Ovary (tissue), 10 donors: ENCODE measurements at regions of chr22 and their contacts with region 1.

Region 1: GRCh38 chr22:22748297-22748743 is 103.9 kb downstream of the GGTLC2 start:
- DNase-seq: peak; percentile 34 to 67 (median 58)
- H3K4me3 ChIP-seq: no peak overlapping the region
- H3K27ac ChIP-seq: no peak overlapping the region
- H3K4me1 ChIP-seq: no peaks in the 10 kb centered on the region
- H3K27me3 ChIP-seq: no peaks in the 10 kb centered on the region
- CTCF ChIP-seq: peak in 2 of 3 donors; percentile 39 to 45
- EP300 ChIP-seq: no peak
- POLR2A ChIP-seq: no peak

Region 2: DNA sequence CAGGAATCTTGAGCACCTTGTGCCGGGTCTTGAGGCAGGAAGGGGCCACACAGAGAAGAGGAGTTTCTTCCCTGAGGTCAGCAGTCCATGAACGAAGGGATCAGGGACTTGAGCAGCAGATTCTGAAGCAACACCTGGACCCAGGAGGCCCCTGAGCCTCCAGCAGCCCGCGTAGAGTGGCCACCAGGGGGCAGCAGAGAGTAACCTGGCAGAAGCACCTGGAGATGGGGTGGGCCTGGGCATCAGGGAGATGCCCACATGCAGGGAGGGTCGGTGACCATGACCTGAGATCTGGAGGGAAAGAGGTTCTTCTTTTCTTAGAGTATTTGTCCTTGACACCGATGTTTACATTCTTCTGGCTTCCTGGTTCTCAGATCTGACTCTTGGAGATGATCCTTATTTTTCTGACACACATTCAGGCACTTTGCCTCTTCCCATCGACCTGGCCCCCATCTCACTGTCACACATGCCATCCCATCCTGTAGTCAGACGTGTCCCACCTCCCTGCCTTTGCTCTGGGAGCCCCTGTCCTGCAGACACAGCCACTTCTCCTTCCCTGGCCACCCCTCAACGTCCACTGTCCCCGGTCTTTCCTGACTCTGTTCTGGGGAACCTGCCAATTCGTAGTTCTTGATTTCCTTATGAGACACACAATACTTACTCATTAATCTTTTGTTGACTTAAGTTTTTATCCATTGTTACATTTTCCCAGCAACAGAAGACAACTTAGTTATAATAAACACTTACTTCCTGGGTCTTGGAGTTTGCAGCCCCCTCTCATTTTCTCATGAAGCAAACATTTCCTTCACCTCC is 37.4 kb before region 1 on chr22:
- intact Hi-C with region 1: loop called in 1 of 4 experiments (anchors 5 kb)
- DNase-seq: peak; percentile 55 to 79 (median 69)
- H3K4me3 ChIP-seq: no peak overlapping the region
- H3K27ac ChIP-seq: no peak overlapping the region
- H3K4me1 ChIP-seq: peaks cover 10% of the 10 kb centered on the region
- H3K27me3 ChIP-seq: no peaks in the 10 kb centered on the region
- CTCF ChIP-seq: peak; percentile 42 to 66 (median 61)
- EP300 ChIP-seq: no peak
- POLR2A ChIP-seq: no peak